Ascending aorta (tissue), 2 donors: ENCODE measurements at regions of chr20 and their contacts with region 1.

Region 1: DNA sequence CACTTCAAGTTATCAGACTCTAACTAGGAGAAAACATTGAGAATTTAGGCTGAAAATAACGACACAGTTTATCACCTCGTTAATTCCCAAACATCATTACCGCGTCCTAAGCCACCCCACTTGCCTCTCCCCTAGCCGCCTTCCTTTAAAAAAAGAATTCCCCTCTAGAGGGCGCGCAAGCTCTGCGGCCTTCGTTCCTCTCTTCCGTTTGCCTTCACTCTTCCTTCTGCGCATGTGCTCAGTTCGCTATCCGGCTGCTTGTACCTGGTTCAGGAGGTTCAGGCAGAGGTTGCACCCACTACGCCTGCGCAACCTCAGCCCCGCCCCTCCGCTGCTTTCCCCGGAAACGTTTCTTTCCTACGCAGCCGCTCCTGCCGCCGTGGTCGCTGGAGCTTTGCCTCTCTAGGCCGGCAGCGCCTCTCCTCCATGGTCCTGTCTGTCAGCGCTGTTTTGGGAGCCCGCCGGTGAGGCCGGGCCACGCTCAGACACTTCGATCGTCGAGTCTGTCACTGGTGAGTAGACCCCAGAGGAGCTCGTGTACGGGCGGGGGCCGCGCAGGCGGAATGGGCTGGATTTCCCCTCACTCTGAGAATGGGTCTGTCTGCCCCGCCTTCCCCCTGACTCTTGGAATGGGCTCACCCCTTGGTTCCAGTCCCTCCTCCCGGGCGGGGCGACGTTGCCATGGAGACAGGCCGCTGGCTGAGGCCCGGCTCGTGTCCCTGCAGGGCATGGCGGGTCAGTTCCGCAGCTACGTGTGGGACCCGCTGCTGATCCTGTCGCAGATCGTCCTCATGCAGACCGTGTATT is at the start of gene SYS1:
- DNase-seq: peak; percentile 90 to 99
- H3K4me3 ChIP-seq: peak within 1 kb of the TSS; percentile 73 to 75
- H3K27ac ChIP-seq: peak within 1 kb of the TSS; percentile 95 to 96
- H3K4me1 ChIP-seq: peaks cover 0 to 26% of the 10 kb centered on the region in 2 donors
- H3K27me3 ChIP-seq: no peaks in the 10 kb centered on the region
- CTCF ChIP-seq: peak; percentile 87 to 90 (median 88)
- total RNA-seq, gene SYS1: 27.4 TPM

Region 2: DNA sequence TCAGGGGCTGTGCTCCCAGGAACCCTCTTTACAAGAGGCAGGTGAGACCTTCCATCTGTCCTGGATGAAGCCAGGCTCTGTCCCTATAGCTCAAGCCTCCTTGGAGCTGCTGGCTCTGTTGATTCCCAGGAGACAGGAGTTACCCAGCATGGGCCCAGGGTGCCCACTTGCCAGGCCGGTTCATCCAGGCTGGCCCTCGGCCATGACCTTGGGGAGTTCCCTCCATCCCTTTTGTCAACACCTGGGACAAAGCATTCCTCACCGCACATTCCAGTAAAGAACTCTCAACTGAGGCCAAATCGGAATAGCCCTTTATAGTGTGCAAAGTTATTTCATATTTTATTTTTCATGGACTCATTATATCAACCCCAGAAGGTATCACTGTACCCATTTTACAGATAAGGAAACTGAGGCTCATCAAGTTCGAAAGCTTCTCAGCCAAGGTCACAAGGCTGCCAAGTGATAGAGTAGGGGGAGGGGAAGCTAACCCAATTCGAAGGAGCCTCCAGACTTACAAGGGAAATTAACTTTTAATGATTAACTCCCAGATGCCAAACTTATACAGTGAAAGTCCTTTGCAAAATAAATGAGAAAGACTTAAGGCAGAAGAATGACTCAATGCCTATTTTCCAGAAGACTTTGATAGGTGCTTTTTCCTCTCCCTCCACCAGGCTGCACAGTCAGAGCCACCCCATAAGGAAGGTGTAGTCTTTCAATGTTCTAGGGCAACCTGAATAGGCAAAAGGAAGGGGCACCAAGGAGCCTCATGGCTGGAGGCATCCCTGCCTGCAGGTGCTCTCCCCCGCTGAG is 33.3 kb before region 1 on chr20:
- intact Hi-C with region 1: no loop called
- DNase-seq: no peak
- H3K4me3 ChIP-seq: no peak overlapping the region
- H3K27ac ChIP-seq: no peak overlapping the region
- H3K4me1 ChIP-seq: no peaks in the 10 kb centered on the region
- H3K27me3 ChIP-seq: no peaks in the 10 kb centered on the region
- CTCF ChIP-seq: no peak

Region 3: GRCh38 chr20:45341939-45342859 is 20.8 kb before region 1 on chr20:
- intact Hi-C with region 1: loop called (anchors 2 kb)
- DNase-seq: peak; percentile 69 to 92
- H3K4me3 ChIP-seq: peak overlapping the region; percentile 18 to 80
- H3K27ac ChIP-seq: peak overlapping the region; percentile 93 to 96
- H3K4me1 ChIP-seq: peaks cover 53 to 80% of the 10 kb centered on the region in 2 donors
- H3K27me3 ChIP-seq: no peaks in the 10 kb centered on the region
- CTCF ChIP-seq: peak in 1 of 3 experiments; percentile 7

Region 4: DNA sequence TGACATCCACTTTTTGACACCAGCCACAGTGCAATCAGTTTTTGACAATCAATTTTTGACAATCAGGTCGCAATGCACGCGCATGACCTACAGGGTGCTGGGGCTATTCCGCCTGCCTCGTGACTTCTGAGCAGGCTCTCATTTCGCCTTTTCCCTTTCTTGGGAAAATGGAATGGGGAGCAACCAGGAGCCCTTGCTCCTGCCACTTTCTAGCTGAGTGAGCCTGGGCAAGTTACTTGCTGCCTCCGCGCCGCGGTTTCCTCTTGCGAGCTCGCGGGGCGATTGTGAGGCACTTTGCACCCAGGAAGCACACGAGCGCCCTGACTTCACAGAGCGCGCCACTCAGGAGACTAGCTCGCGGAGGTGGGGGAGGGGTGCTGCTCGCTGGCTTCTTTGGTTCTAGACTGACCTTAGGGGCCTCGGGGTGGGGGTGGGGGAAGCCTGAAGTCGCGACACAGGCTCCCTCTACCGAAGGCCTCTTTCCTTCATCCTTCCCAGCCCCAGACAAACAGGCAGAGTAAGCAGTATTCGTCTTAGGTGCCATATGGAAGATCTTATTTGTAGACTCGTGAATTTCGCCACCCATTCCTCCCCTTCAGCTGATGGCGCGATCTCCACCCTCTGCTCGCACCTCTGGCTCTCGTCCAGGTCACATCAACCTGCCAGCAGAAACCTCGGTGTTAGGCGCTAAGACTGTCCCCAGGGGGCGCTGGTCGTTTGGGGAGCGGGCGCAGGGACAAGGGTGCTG is 10.5 kb after region 1 on chr20:
- intact Hi-C with region 1: loop called (anchors 1 kb)
- DNase-seq: peak in 1 of 2 donors; percentile 93
- H3K4me3 ChIP-seq: peak overlapping the region; percentile 60 to 65
- H3K27ac ChIP-seq: peak overlapping the region; percentile 84 to 92
- H3K4me1 ChIP-seq: peaks cover 0 to 11% of the 10 kb centered on the region in 2 donors
- H3K27me3 ChIP-seq: no peaks in the 10 kb centered on the region
- CTCF ChIP-seq: peak; percentile 84 to 90 (median 86)

Region 5: GRCh38 chr20:45415774-45416637 is 53.0 kb after region 1 on chr20 and contains the start of gene PIGT:
- intact Hi-C with region 1: loop called (anchors 1 kb)
- DNase-seq: peak; percentile 64 to 94
- H3K4me3 ChIP-seq: peak within 1 kb of the TSS; percentile 89 to 91
- H3K27ac ChIP-seq: peak within 1 kb of the TSS; percentile 76 to 83
- H3K4me1 ChIP-seq: peaks cover 6 to 25% of the 10 kb centered on the region in 2 donors
- H3K27me3 ChIP-seq: no peaks in the 10 kb centered on the region
- CTCF ChIP-seq: no peak
- total RNA-seq, gene PIGT: 142 TPM